ENCODE measurements at regions of chr2 and their contacts with region 1.

Region 1: DNA sequence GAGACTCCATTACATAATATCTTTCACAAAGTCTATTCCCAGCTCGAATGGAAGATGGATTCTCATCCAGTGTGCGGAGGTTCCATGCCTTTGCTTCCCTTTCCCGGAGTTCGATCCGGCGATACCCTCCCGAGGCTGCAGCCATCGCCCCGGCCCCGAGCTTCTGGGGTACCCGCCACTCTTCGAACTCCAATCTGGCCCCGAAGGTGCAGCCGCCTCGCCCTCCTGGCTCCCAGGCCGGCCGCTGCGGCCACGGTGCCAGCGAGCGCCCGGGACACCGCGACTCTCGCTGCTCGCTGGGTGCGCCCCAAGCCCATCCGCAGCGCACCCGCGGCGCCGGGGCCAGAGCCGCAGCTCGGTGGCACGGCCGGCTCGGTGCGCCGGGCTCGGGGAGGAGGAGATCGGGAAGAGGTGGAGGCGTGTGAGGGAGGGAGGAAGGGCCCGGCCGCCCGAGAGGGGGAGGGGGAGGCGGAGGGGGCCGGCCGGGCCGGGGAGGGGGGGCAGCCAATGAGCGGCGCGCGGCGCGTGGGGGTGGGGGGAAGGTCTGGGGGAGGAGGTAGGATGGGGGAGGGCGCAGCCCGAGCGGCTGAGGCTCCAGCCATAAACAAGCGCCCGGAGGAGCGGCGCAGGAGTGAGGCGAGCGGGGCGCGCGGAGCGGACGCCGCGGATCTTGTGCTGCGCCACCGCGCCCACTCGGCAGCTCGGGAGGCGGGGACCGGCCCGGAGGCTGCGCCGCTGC is at the start of gene CRIM1:
- DNase-seq: peak; percentile 95
- ATAC-seq: peak; percentile 89
- H3K4me3 ChIP-seq: peak within 1 kb of the TSS; percentile 87
- H3K27ac ChIP-seq: peak within 1 kb of the TSS; percentile 79
- H3K4me1 ChIP-seq: peaks cover 43% of the 10 kb centered on the region
- H3K27me3 ChIP-seq: no peaks in the 10 kb centered on the region
- CTCF ChIP-seq: no peak
- total RNA-seq, gene CRIM1: 158 TPM

Region 2: GRCh38 chr2:36068086-36068485 is 287.2 kb before region 1 on chr2:
- intact Hi-C with region 1: no loop called
- DNase-seq: no peak
- ATAC-seq: no peak
- H3K4me3 ChIP-seq: no peak overlapping the region
- H3K27ac ChIP-seq: no peak overlapping the region
- H3K4me1 ChIP-seq: no peaks in the 10 kb centered on the region
- H3K27me3 ChIP-seq: no peaks in the 10 kb centered on the region
- CTCF ChIP-seq: no peak

Region 3: GRCh38 chr2:36307441-36307840 is 47.9 kb before region 1 on chr2:
- intact Hi-C with region 1: no loop called
- DNase-seq: no peak
- ATAC-seq: no peak
- H3K4me3 ChIP-seq: no peak overlapping the region
- H3K27ac ChIP-seq: no peak overlapping the region
- H3K4me1 ChIP-seq: no peaks in the 10 kb centered on the region
- H3K27me3 ChIP-seq: no peaks in the 10 kb centered on the region
- CTCF ChIP-seq: no peak

Region 4: DNA sequence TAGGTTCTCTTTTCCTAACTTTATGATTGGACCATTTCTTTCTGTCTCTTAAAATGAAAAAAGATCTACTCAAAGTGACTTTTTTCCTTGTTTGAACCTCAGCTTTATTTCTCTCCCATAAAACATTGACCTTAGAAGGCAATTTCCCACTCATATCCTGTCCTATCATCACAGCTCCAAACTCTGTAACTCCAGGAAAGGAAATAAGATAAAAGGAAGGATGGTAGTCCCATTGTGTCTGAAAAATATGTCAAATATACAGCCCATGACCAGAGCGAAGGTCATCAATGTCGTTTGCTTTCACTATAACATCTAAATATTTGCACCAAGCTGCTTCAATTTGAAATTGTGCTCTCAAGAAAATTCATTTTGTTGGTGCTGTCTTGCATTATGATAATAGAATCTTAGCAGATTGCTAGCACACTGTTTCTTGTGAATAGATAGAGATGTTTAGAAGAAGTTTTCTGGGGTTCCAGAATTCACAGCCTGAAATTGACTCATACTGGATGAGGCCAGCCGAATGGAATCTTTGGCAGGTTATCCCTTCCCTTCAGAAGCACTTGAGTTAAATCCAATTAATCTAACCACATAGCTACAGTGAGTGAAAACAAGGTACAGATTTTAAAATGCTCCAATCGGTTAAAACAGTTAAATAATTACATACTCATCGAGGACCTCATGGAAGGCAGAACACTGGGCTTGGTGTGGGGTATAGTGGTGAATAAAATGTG is 95.3 kb after region 1 on chr2:
- intact Hi-C with region 1: loop called (anchors 5 kb)
- DNase-seq: no peak
- ATAC-seq: no peak
- H3K4me3 ChIP-seq: no peak overlapping the region
- H3K27ac ChIP-seq: peak overlapping the region; percentile 20
- H3K4me1 ChIP-seq: peaks cover 16% of the 10 kb centered on the region
- H3K27me3 ChIP-seq: no peaks in the 10 kb centered on the region
- CTCF ChIP-seq: no peak

Region 5: GRCh38 chr2:36507408-36507812 is 152.1 kb after region 1 on chr2:
- intact Hi-C with region 1: loop called (anchors 10 kb)
- DNase-seq: no peak
- ATAC-seq: peak; percentile 95
- H3K4me3 ChIP-seq: no peak overlapping the region
- H3K27ac ChIP-seq: no peak overlapping the region
- H3K4me1 ChIP-seq: no peaks in the 10 kb centered on the region
- H3K27me3 ChIP-seq: no peaks in the 10 kb centered on the region
- CTCF ChIP-seq: peak; percentile 73

Measured in upper lobe of right lung (tissue), 1 donor.